Endothelial cell of umbilical vein (primary cell): ENCODE measurements at regions of chr15 and their contacts with region 1.

Region 1: GRCh38 chr15:79853458-79854328 is 43.1 kb downstream of the MTHFS start:
- DNase-seq: peak; percentile 88
- H3K4me3 ChIP-seq: no peak overlapping the region
- H3K27ac ChIP-seq: no peak overlapping the region
- H3K4me1 ChIP-seq: no peaks in the 10 kb centered on the region
- H3K27me3 ChIP-seq: no peaks in the 10 kb centered on the region
- CTCF ChIP-seq: peak; percentile 93 to 95
- POLR2A ChIP-seq: no peak

Region 2: DNA sequence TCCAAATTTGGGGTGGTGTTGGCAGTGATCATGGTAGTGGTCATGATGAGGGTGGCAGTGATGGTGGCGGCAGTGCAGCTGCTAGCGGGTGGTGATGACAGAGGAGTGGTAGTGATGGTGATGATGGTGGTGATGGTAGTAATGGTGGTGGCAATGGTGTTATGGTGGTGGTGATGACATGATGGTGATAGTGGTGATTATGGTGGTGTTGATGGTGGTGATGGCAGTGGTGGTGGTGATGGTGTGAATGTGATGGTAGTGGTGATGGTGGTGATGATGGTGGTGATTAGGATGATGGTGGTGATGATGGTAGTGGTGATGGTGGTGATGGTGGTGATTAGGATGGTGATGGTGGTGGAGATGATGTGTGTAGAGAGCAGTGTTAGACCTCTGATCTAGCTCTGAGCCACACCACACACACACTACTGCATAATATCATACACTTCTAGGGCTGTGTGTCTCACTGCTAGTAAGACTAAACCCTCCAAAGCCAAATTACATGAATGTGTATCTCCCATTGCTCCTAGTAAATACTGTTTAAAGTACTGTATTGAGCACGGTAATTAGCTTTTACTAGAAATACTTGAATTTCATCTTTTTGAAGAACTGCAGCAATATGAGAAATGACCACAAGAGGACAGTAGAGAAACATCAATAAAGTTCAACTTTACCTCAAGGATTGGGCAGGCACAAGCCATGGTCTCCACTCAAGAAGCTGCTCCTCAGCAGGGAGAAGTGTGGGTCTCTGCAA is 514.0 kb before region 1 on chr15:
- CTCF ChIA-PET with region 1: interaction called, 228 read pairs
- POLR2A ChIA-PET with region 1: no interaction called
- dilution Hi-C with region 1: no loop called
- intact Hi-C with region 1: loop called (anchors 1 kb)
- DNase-seq: peak; percentile 69
- H3K4me3 ChIP-seq: no peak overlapping the region
- H3K27ac ChIP-seq: no peak overlapping the region
- H3K4me1 ChIP-seq: no peaks in the 10 kb centered on the region
- H3K27me3 ChIP-seq: no peaks in the 10 kb centered on the region
- CTCF ChIP-seq: peak; percentile 61 to 71
- POLR2A ChIP-seq: no peak

Region 3: DNA sequence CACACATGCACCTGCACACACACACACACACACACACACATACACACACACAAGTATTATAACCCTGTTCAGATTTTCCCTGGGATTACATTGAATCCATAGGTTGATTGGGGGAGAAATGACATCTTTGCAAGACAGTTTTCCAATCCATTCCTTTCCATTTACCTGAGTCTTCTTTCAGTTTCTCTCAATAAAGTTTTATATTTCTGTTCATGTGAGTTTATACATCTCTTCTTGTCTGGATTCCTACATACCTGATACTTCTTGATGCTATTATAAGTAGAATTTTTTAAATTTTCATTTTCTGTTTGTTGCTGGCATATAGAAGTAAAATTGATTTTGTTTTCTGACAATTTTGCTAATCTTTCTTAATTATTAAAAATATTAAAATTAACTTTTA is 466.1 kb before region 1 on chr15:
- CTCF ChIA-PET with region 1: interaction called, 535 read pairs
- POLR2A ChIA-PET with region 1: no interaction called
- dilution Hi-C with region 1: no loop called
- intact Hi-C with region 1: no loop called
- DNase-seq: no peak
- H3K4me3 ChIP-seq: no peak overlapping the region
- H3K27ac ChIP-seq: no peak overlapping the region
- H3K4me1 ChIP-seq: no peaks in the 10 kb centered on the region
- H3K27me3 ChIP-seq: no peaks in the 10 kb centered on the region
- CTCF ChIP-seq: no peak
- POLR2A ChIP-seq: no peak

Region 4: GRCh38 chr15:79596051-79596507 is 257.6 kb before region 1 on chr15:
- CTCF ChIA-PET with region 1: interaction called, 11 read pairs
- POLR2A ChIA-PET with region 1: no interaction called
- dilution Hi-C with region 1: no loop called
- intact Hi-C with region 1: loop called (anchors 2 kb)
- DNase-seq: peak; percentile 64
- H3K4me3 ChIP-seq: no peak overlapping the region
- H3K27ac ChIP-seq: no peak overlapping the region
- H3K4me1 ChIP-seq: no peaks in the 10 kb centered on the region
- H3K27me3 ChIP-seq: no peaks in the 10 kb centered on the region
- CTCF ChIP-seq: peak; percentile 79 to 94
- POLR2A ChIP-seq: no peak

Region 5: DNA sequence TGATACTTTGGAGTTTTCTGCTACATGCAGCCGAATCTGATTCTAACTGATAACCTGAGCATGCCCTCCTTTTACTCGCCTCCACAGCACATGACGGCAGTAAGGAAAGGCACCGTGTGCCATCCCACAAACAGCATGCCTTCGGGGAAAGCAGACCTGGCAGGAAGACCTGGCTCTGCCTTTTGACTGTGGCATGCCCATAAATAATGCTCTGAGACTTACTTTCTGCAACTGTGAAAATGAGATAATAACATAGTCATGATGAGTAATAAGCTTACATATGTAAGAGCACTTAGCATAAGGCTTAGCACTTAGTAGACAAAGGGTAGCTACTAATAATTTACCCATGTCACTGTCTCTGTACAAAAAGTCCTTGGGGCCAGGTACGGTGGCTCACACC is 10.2 kb after region 1 on chr15:
- CTCF ChIA-PET with region 1: interaction called, 32 read pairs
- POLR2A ChIA-PET with region 1: interaction called, 12 read pairs
- dilution Hi-C with region 1: no loop called
- intact Hi-C with region 1: no loop called
- DNase-seq: peak; percentile 73
- H3K4me3 ChIP-seq: no peak overlapping the region
- H3K27ac ChIP-seq: peak overlapping the region; percentile 39
- H3K4me1 ChIP-seq: peaks cover 19% of the 10 kb centered on the region
- H3K27me3 ChIP-seq: no peaks in the 10 kb centered on the region
- CTCF ChIP-seq: no peak
- POLR2A ChIP-seq: no peak

Region 6: GRCh38 chr15:79923515-79924395 is 70.1 kb after region 1 on chr15:
- CTCF ChIA-PET with region 1: interaction called, 10 read pairs
- POLR2A ChIA-PET with region 1: interaction called, 3 read pairs
- dilution Hi-C with region 1: no loop called
- intact Hi-C with region 1: no loop called
- DNase-seq: peak; percentile 93
- H3K4me3 ChIP-seq: peak overlapping the region; percentile 87 to 96 (median 92)
- H3K27ac ChIP-seq: peak overlapping the region; percentile 52
- H3K4me1 ChIP-seq: peaks cover 10% of the 10 kb centered on the region
- H3K27me3 ChIP-seq: no peaks in the 10 kb centered on the region
- CTCF ChIP-seq: no peak
- POLR2A ChIP-seq: peak; percentile 85